ENCODE measurements at regions of chr14 and their contacts with region 1.

Region 1: GRCh38 chr14:91177073-91178034 is 63.5 kb downstream of the DGLUCY start:
- DNase-seq: peak; percentile 82
- H3K4me3 ChIP-seq: no peak overlapping the region
- H3K27ac ChIP-seq: peak overlapping the region; percentile 42
- H3K4me1 ChIP-seq: peaks cover 10% of the 10 kb centered on the region
- CTCF ChIP-seq: peak; percentile 98

Region 2: GRCh38 chr14:90903101-90903500 is 274.3 kb before region 1 on chr14:
- CTCF ChIA-PET with region 1: interaction called, 4 read pairs
- POLR2A ChIA-PET with region 1: interaction called, 3 read pairs
- intact Hi-C with region 1: loop called (anchors 1 kb)
- DNase-seq: peak; percentile 70
- H3K4me3 ChIP-seq: no peak overlapping the region
- H3K27ac ChIP-seq: no peak overlapping the region
- H3K4me1 ChIP-seq: peaks cover 8% of the 10 kb centered on the region
- CTCF ChIP-seq: peak; percentile 95

Region 3: DNA sequence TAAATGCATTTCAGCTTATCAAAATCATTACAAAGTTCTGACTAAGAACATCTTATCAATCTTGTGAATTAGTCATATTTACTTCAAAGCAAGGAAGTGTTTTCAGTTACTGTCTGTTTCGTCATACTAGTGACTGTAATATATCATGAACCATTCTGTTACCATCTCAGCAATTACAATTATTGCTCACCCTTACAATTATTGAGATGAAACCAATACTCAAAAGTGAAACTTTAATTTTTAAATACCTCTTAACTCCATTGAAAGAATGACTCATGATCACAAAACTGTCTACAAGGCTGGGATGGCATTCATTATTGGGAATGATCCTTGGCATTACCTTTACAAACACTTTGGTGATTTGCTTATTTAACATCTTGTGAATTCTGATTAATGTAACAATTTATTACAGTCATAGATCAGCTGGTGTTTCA is 207.2 kb before region 1 on chr14:
- CTCF ChIA-PET with region 1: no interaction called
- POLR2A ChIA-PET with region 1: no interaction called
- intact Hi-C with region 1: no loop called
- DNase-seq: no peak
- H3K4me3 ChIP-seq: no peak overlapping the region
- H3K27ac ChIP-seq: no peak overlapping the region
- H3K4me1 ChIP-seq: no peaks in the 10 kb centered on the region
- CTCF ChIP-seq: no peak

Region 4: GRCh38 chr14:91048265-91048664 is 129.1 kb before region 1 on chr14:
- CTCF ChIA-PET with region 1: no interaction called
- POLR2A ChIA-PET with region 1: no interaction called
- intact Hi-C with region 1: no loop called
- DNase-seq: no peak
- H3K4me3 ChIP-seq: no peak overlapping the region
- H3K27ac ChIP-seq: no peak overlapping the region
- H3K4me1 ChIP-seq: peaks cover 36% of the 10 kb centered on the region
- CTCF ChIP-seq: no peak

Region 5: GRCh38 chr14:91129276-91129675 is 48.1 kb before region 1 on chr14:
- CTCF ChIA-PET with region 1: no interaction called
- POLR2A ChIA-PET with region 1: no interaction called
- intact Hi-C with region 1: no loop called
- DNase-seq: no peak
- H3K4me3 ChIP-seq: no peak overlapping the region
- H3K27ac ChIP-seq: no peak overlapping the region
- H3K4me1 ChIP-seq: no peaks in the 10 kb centered on the region
- CTCF ChIP-seq: no peak

Measured in OCI-LY7 (cell line).